Aorta (tissue), 5 donors: ENCODE measurements at regions of chr11 and their contacts with region 1.

Region 1: DNA sequence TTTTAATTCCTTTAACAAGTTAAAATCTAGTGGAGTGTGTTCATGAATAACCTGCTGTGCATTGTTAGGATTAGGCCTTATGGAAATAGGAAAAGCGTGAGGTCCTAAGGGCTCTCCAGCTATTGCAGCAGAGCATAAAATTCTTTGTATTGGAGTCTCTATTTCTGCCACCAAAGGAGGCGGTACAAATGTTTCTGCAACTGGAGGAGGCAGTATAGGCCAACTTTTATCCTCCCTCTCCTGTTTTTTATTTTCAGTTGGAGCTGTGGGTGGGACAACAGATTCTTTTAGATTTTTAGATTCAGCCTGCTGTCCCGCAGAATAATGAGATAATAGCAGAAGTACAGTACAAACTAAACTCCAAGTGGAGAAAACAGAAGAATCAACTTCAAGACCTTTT is 26.2 kb downstream of the OR10A6 start:
- DNase-seq: no peak
- ATAC-seq: no peak
- H3K4me3 ChIP-seq: no peak overlapping the region
- H3K27ac ChIP-seq: peak overlapping the region in 1 of 2 donors; percentile 64
- H3K4me1 ChIP-seq: peaks cover 0 to 1% of the 10 kb centered on the region in 2 donors
- H3K27me3 ChIP-seq: no peaks in the 10 kb centered on the region

Region 2: DNA sequence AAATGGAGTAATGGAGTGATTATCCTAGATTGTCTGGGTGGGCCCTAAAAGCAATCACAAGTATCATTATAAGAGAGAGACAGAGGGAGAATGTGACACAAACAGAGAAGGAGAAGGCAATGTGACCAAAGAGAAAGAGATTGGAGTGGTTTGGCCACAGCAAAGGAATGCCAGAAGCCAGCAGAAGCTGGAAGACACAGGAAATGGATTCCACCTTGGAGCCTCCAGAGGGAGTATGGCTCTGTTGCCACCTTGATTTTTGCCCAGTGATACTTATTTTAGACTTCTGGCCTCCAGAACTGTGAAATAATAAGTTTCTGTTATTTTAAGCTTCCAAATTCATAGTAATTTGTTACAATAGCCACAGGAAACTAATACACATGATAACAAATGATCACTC is 71.4 kb before region 1 on chr11:
- intact Hi-C with region 1: no loop called
- DNase-seq: no peak
- ATAC-seq: no peak
- H3K4me3 ChIP-seq: no peak overlapping the region
- H3K27ac ChIP-seq: no peak overlapping the region
- H3K4me1 ChIP-seq: no peaks in the 10 kb centered on the region
- H3K27me3 ChIP-seq: no peaks in the 10 kb centered on the region

Region 3: GRCh38 chr11:7949934-7950333 is 45.0 kb after region 1 on chr11:
- intact Hi-C with region 1: no loop called
- DNase-seq: no peak
- ATAC-seq: no peak
- H3K4me3 ChIP-seq: no peak overlapping the region
- H3K27ac ChIP-seq: no peak overlapping the region
- H3K4me1 ChIP-seq: no peaks in the 10 kb centered on the region
- H3K27me3 ChIP-seq: no peaks in the 10 kb centered on the region

Region 4: DNA sequence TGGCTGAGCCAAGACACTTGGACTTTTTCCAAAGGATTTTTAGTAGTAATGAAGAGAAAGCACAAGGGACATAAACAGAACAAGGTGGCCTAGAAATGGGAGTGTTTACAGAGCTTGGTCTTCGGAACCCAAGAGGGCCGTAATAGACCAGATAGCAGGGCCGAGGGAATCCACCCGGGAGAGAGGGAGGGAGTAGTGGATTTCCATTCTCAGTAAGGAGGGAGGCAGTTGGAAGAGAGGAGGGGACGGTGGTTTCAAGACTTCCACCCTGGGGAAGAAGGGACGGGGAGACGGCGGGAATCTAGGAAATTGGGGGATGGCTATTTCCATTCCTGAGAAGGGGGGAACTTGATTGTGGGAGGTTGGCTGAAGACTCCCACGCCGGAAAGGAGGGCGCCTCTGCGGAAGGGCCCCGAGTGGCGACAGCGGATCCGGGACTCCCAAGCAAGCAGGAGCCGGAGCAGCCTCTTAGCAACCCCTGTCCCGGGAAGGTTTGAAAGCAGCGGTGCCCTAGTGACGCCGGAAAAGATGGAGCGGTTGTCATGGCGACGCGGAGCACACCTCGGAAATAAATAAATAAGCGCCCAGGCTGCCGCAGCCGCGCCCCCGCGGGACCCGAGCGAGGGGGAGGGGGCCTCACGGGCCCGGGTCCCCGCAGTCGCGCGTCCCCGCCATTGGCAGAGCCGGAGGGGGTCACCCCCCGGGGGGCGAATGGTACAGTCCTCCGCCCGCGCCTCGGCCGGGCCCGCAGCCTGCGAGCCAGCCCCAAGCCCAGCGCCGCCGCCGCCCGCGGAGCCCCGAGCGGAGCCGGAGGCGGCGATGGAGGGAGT is 113.8 kb after region 1 on chr11:
- intact Hi-C with region 1: no loop called
- DNase-seq: peak; percentile 83 to 92
- ATAC-seq: peak; percentile 80
- H3K4me3 ChIP-seq: peak overlapping the region; percentile 47 to 59
- H3K27ac ChIP-seq: no peak overlapping the region
- H3K4me1 ChIP-seq: no peaks in the 10 kb centered on the region
- H3K27me3 ChIP-seq: no peaks in the 10 kb centered on the region

Region 5: GRCh38 chr11:8080674-8081590 is 176.0 kb after region 1 on chr11 and contains the start of gene TUB:
- intact Hi-C with region 1: loop called in 1 of 2 experiments (anchors 10 kb)
- DNase-seq: peak in 1 of 2 donors; percentile 77
- ATAC-seq: peak; percentile 36
- H3K4me3 ChIP-seq: peak within 1 kb of the TSS; percentile 63 to 77
- H3K27ac ChIP-seq: no peak within 1 kb of the TSS
- H3K4me1 ChIP-seq: no peaks in the 10 kb centered on the region
- H3K27me3 ChIP-seq: no peaks in the 10 kb centered on the region
- total RNA-seq, gene TUB: 5.9 to 12.9 TPM